Left ventricle myocardium inferior (tissue), 1 donor: ENCODE measurements at regions of chr11 and their contacts with region 1.

Region 1: GRCh38 chr11:10792398-10792975 is 16.2 kb downstream of the EIF4G2 start:
- DNase-seq: peak; percentile 87
- H3K4me3 ChIP-seq: peak overlapping the region; percentile 38
- H3K27ac ChIP-seq: no peak overlapping the region
- H3K4me1 ChIP-seq: peaks cover 9% of the 10 kb centered on the region
- H3K27me3 ChIP-seq: no peaks in the 10 kb centered on the region
- CTCF ChIP-seq: peak; percentile 95

Region 2: DNA sequence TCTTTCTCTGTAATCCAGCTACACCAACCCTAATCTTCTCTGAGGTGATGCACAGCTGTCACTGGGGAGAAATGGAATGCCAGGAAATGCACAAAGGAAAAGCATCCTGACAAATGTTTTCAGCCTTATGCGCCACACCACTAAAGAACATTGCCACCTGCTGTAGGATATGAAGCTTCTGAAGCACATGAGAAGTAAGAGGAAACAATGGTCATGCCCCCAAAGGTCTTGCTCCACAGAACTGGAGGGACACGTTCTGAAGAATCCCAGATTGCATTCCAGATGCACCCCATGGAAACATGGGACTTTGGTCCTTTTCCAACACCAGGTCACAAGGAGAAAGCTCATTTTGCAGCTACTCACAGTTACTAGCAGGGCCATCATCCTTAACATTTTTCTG is 114.0 kb after region 1 on chr11:
- intact Hi-C with region 1: loop called (anchors 10 kb)
- DNase-seq: no peak
- H3K4me3 ChIP-seq: no peak overlapping the region
- H3K27ac ChIP-seq: no peak overlapping the region
- H3K4me1 ChIP-seq: peaks cover 22% of the 10 kb centered on the region
- H3K27me3 ChIP-seq: no peaks in the 10 kb centered on the region
- CTCF ChIP-seq: peak; percentile 51

Region 3: DNA sequence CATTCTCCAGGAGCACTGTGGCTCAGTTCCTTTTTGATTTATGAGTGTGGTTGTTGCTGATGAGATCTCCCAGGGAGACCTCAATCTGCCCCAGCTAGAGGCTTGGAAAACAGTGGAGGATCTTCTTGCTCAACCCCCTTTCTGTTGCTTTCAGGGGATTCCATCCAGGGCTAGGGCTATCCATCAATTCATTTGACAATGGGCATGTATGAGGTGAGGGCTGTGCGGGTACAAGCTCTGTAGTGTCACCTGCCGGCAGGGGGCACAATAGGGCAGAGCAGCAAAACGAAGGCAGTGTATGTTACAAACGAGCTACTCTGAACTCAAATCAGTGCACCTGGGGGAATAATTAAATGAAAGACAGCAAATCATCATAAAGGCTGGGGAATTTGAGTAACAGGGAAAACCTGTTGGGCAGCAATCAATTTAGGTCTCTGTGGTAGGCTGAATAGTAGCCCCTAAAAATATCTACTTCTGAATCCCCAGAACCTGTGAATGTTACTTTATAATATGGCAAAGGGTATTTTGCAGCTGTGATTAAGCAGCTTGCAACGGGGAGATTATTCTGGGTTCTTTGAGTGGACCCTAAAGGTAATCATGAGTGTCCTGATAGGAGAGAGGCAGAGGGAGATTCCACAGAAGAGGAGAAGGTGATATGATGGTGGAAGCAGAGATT is 235.7 kb after region 1 on chr11:
- intact Hi-C with region 1: loop called (anchors 10 kb)
- DNase-seq: peak; percentile 69
- H3K4me3 ChIP-seq: no peak overlapping the region
- H3K27ac ChIP-seq: no peak overlapping the region
- H3K4me1 ChIP-seq: no peaks in the 10 kb centered on the region
- H3K27me3 ChIP-seq: no peaks in the 10 kb centered on the region
- CTCF ChIP-seq: peak; percentile 87